Heart right ventricle (tissue), 16 donors: ENCODE measurements at regions of chr9 and their contacts with region 1.

Region 1: GRCh38 chr9:111759762-111760639 is 34.7 kb downstream of the SHOC1 start:
- DNase-seq: peak in 1 of 2 donors; percentile 72
- ATAC-seq: peak; percentile 65 to 93 (median 86)
- H3K4me3 ChIP-seq: no peak overlapping the region
- H3K27ac ChIP-seq: peak overlapping the region in 1 of 10 donors; percentile 41
- H3K4me1 ChIP-seq: peaks cover 0 to 12% (median 0%) of the 10 kb centered on the region in 9 donors
- H3K27me3 ChIP-seq: no peaks in the 10 kb centered on the region
- CTCF ChIP-seq: peak; percentile 50 to 81 (median 75)

Region 2: DNA sequence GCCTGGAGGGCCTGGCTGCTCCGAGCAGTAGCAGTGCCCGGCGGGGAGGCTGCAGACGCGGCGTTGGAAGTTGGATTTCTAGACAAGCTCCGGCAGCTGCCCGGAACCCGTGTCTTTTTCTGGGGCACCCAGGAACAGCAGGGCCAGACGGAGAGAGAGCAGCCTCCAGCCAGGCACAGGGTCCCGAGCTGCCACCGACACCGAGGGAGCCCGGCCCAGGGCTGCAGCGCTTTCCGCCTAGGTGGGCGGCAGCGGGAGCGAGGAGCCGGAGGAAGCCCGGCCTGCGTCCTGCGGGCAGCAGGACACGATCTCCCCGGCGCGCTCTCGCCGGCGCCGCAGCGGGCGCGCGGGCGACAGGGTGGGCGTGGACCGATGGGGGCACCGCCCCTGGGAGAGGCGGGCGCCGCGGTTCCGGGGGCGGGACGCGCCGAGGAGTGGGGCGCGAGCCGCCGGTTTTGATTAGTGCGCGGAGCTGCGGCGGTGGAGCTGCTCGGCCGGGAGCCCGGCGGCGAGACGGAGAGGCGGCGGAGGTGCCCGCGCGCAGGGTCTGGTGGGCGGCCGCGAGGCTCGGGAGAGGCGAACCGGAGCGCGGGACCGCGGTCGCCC is 136.5 kb after region 1 on chr9 and contains the start of gene UGCG:
- intact Hi-C with region 1: loop called in 4 of 10 experiments (anchors 5 to 10 kb)
- DNase-seq: peak; percentile 85 to 92
- ATAC-seq: peak; percentile 97 to 100 (median 98)
- H3K4me3 ChIP-seq: peak within 1 kb of the TSS; percentile 72 to 95 (median 82)
- H3K27ac ChIP-seq: peak within 1 kb of the TSS; percentile 79 to 98 (median 95)
- H3K4me1 ChIP-seq: peaks cover 0 to 49% (median 39%) of the 10 kb centered on the region in 9 donors
- H3K27me3 ChIP-seq: no peaks in the 10 kb centered on the region
- CTCF ChIP-seq: no peak
- total RNA-seq, gene UGCG: 11.1 to 42.6 (median 13.6) TPM

Region 3: GRCh38 chr9:112074250-112075008 is 314.4 kb after region 1 on chr9:
- intact Hi-C with region 1: loop called (anchors 1 to 5 kb)
- DNase-seq: peak; percentile 23 to 77
- ATAC-seq: peak; percentile 83 to 92 (median 88)
- H3K4me3 ChIP-seq: peak overlapping the region in 2 of 10 donors; percentile 6
- H3K27ac ChIP-seq: peak overlapping the region in 9 of 10 donors; percentile 48 to 95 (median 72)
- H3K4me1 ChIP-seq: peaks cover 0 to 86% (median 29%) of the 10 kb centered on the region in 9 donors
- H3K27me3 ChIP-seq: no peaks in the 10 kb centered on the region
- CTCF ChIP-seq: peak; percentile 73 to 95 (median 91)

Region 4: GRCh38 chr9:112341741-112342140 is 581.7 kb after region 1 on chr9:
- intact Hi-C with region 1: loop called in 1 of 10 experiments (anchors 5 kb)
- DNase-seq: no peak
- ATAC-seq: no peak
- H3K4me3 ChIP-seq: no peak overlapping the region
- H3K27ac ChIP-seq: no peak overlapping the region
- H3K4me1 ChIP-seq: peaks cover 0 to 5% (median 0%) of the 10 kb centered on the region in 9 donors
- H3K27me3 ChIP-seq: no peaks in the 10 kb centered on the region
- CTCF ChIP-seq: no peak

Region 5: DNA sequence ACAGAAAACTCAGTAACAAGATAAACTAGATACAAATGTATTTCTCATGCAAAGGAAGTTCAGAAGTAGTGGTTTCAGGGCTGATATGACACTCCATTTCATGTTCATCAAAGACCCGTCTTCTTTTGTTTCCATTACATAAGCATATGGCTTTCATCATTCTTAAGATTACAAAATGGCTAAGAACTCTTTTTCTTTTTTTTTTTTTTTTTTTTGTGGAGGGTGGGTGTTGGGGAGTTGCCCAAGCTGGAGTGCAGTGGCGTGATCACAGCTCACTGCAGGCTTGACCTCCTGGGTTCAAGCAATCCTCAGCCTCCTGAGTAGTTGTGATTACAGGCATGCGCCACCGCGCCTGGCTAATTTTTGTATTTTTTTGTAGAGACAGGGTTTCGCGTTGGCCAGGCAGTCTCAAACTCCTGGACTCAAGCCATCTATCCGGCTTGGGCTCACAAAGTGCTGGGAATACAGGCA is 595.5 kb after region 1 on chr9:
- intact Hi-C with region 1: loop called in 7 of 10 experiments (anchors 5 to 10 kb)
- DNase-seq: peak in 1 of 2 donors; percentile 10
- ATAC-seq: peak in 2 of 8 donors; percentile 22 to 25
- H3K4me3 ChIP-seq: no peak overlapping the region
- H3K27ac ChIP-seq: no peak overlapping the region
- H3K4me1 ChIP-seq: peaks cover 0 to 8% (median 0%) of the 10 kb centered on the region in 9 donors
- H3K27me3 ChIP-seq: no peaks in the 10 kb centered on the region
- CTCF ChIP-seq: no peak

Region 6: DNA sequence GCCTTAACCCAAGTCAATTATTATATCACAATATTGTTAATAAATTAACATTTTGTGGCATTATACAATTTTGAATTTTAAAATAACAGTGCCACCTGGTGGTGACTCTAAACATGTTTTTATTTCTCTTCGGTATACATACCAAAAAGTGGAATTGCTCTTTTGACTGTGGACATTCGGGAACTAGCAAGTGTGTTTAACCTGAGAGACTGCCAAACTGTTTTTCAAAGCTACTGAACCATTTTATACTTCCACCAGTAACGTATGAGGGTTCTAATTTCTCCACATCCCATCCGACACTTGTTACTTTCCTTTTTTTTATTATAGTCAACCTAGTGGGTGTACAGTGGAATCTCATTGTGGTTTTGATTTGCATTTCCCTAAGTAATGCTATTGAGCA is 601.6 kb after region 1 on chr9:
- intact Hi-C with region 1: loop called in 7 of 10 experiments (anchors 5 to 10 kb)
- DNase-seq: no peak
- ATAC-seq: peak in 5 of 8 donors; percentile 46 to 56 (median 52)
- H3K4me3 ChIP-seq: no peak overlapping the region
- H3K27ac ChIP-seq: no peak overlapping the region
- H3K4me1 ChIP-seq: peaks cover 0 to 3% (median 0%) of the 10 kb centered on the region in 9 donors
- H3K27me3 ChIP-seq: no peaks in the 10 kb centered on the region
- CTCF ChIP-seq: peak; percentile 39 to 73 (median 60)